PC-3 (cell line): ENCODE measurements at regions of chr13 and their contacts with region 1.

Region 1: GRCh38 chr13:65913173-65913572 is 1317.0 kb downstream of the PCDH9 start:
- DNase-seq: peak; percentile 83
- ATAC-seq: peak; percentile 86
- H3K4me3 ChIP-seq: no peak overlapping the region
- H3K27ac ChIP-seq: peak overlapping the region; percentile 68
- H3K4me1 ChIP-seq: peaks cover 39% of the 10 kb centered on the region
- H3K27me3 ChIP-seq: no peaks in the 10 kb centered on the region
- CTCF ChIP-seq: no peak

Region 2: DNA sequence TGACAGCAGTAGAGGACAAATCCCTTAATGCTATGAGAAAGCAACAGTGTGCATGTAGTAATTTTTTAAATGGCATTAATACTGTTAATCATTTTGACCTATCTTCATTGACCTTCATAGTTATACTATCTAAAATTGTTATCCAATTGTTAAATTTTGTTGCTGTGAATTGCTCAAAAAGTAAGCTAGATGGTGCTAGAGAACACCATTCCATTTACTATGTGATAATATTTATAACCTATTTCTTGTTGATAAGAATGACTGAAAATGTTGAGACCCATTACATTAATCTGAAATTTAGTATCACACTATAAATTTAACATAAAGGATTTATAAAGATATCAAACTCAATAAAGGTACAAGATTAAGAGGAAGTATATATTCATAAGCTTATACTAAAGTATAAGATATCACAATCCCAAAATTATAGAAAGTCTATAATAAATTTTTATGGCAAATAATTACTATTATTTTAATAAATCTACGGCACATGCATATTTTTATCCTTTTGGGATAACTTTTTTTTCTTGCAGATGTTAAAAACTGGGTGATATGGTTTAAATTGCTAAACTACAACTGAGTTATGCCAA is 256.3 kb before region 1 on chr13:
- CTCF ChIA-PET with region 1: no interaction called
- POLR2A ChIA-PET with region 1: no interaction called
- intact Hi-C with region 1: loop called (anchors 5 kb)
- DNase-seq: peak; percentile 37
- ATAC-seq: no peak
- H3K4me3 ChIP-seq: no peak overlapping the region
- H3K27ac ChIP-seq: no peak overlapping the region
- H3K4me1 ChIP-seq: no peaks in the 10 kb centered on the region
- H3K27me3 ChIP-seq: no peaks in the 10 kb centered on the region
- CTCF ChIP-seq: peak; percentile 65

Region 3: DNA sequence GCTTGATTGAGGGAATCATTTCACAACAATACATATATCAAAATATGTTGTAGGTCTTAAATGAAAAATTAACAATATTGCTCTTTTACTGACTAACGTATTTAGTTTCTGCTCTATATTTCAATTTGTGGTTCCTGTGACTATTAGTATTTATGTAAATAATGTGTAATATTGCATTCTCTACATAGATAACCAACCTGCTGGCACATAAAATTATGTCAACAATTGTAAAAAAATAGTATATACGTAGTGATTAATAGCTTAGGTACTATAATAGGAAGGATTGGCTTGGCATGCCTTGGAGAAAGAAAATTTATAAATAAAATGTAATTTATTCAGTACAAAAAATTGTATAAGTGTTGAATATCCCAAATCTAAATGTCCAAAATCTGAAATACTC is 19.1 kb before region 1 on chr13:
- CTCF ChIA-PET with region 1: no interaction called
- POLR2A ChIA-PET with region 1: no interaction called
- intact Hi-C with region 1: loop called (anchors 1 kb)
- DNase-seq: peak; percentile 60
- ATAC-seq: peak; percentile 78
- H3K4me3 ChIP-seq: no peak overlapping the region
- H3K27ac ChIP-seq: peak overlapping the region; percentile 36; the same call in 1 of the 2 replicates
- H3K4me1 ChIP-seq: peaks cover 18% of the 10 kb centered on the region
- H3K27me3 ChIP-seq: no peaks in the 10 kb centered on the region
- CTCF ChIP-seq: no peak